Naive thymus-derived CD4-positive, alpha-beta T cell (primary cell): ENCODE measurements at regions of chr1 and their contacts with region 1.

Region 1: GRCh38 chr1:54052934-54053744 is at the starts of genes TCEANC2 and TMEM59:
- DNase-seq: peak; percentile 84 to 99 (median 98)
- ATAC-seq: peak; percentile 94
- H3K4me3 ChIP-seq: peak within 1 kb of the TSS; percentile 94
- H3K4me3 Mint-ChIP-seq: no peak within 1 kb of the TSS
- H3K27ac ChIP-seq: peak within 1 kb of the TSS; percentile 92
- H3K27ac Mint-ChIP-seq: no peak within 1 kb of the TSS
- H3K4me1 ChIP-seq: peaks cover 23 to 34% of the 10 kb centered on the region in 2 donors
- H3K4me1 Mint-ChIP-seq: peaks cover 27 to 62% (median 52%) of the 10 kb centered on the region in 7 donors
- H3K27me3 ChIP-seq: no peaks in the 10 kb centered on the region
- H3K27me3 Mint-ChIP-seq: no peaks in the 10 kb centered on the region
- total RNA-seq, gene TCEANC2: 6.3 to 15.1 (median 12.2) TPM
- total RNA-seq, gene TMEM59: 127 to 197 (median 183) TPM

Region 2: GRCh38 chr1:53220171-53220961 is 832.8 kb before region 1 on chr1 and contains the start of gene CZIB:
- CTCF ChIA-PET with region 1: no interaction called
- POLR2A ChIA-PET with region 1: no interaction called
- intact Hi-C with region 1: loop called in 1 of 2 experiments (anchors 1 kb)
- DNase-seq: peak; percentile 85 to 97 (median 92)
- ATAC-seq: peak; percentile 97
- H3K4me3 ChIP-seq: peak within 1 kb of the TSS; percentile 80
- H3K4me3 Mint-ChIP-seq: peak within 1 kb of the TSS; percentile 83 to 94 (median 92)
- H3K27ac ChIP-seq: peak within 1 kb of the TSS; percentile 99
- H3K27ac Mint-ChIP-seq: peak within 1 kb of the TSS; percentile 91 to 98 (median 96)
- H3K4me1 ChIP-seq: peaks cover 15% of the 10 kb centered on the region in 2 donors
- H3K4me1 Mint-ChIP-seq: peaks cover 15 to 31% (median 26%) of the 10 kb centered on the region in 7 donors
- H3K27me3 ChIP-seq: no peaks in the 10 kb centered on the region
- H3K27me3 Mint-ChIP-seq: no peaks in the 10 kb centered on the region
- total RNA-seq, gene CZIB: 41.9 to 94.9 (median 51.4) TPM

Region 3: DNA sequence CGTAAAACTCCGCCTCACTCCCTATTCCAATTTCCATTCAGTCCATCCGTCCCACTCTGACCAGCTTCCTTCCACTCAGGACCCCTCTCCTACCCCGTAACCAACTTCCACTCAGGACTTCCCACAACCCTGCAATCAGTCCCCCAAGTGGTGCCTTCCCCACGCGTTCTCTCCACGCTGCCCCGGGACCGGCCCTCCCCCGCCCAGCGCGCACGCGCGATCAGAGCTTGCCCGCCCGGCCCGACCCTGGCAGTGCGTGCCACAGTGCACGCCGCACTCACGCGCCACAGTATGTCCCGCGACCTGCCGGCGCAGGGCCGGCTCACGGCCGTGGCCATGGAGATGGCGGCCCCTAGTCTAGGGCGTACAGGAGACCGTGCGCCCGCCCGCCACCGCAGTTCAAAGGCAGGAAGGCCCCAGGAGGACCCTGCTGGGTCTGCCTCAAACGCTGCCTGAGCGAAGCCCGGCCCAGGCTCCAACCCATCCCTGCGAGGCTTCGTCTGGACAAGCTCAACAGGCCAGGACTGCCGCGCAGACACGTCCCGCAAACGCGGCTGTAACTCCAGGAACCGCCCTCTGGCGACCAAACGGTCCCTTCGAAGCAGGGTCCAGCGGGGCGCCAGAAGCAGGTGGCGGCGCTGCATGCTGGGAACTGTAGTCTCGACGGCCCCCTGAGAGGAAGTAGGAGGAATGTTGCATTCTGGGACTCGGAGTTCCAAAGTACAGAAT is 215.1 kb before region 1 on chr1 and contains the start of gene NDC1:
- CTCF ChIA-PET with region 1: no interaction called
- POLR2A ChIA-PET with region 1: interaction called, 4 read pairs
- intact Hi-C with region 1: loop called (anchors 1 kb)
- DNase-seq: peak; percentile 84 to 95 (median 92)
- ATAC-seq: peak; percentile 95
- H3K4me3 ChIP-seq: peak within 1 kb of the TSS; percentile 92
- H3K4me3 Mint-ChIP-seq: peak within 1 kb of the TSS; percentile 96 to 100 (median 99)
- H3K27ac ChIP-seq: peak within 1 kb of the TSS; percentile 95
- H3K27ac Mint-ChIP-seq: peak within 1 kb of the TSS; percentile 96 to 99 (median 98)
- H3K4me1 ChIP-seq: no peaks in the 10 kb centered on the region
- H3K4me1 Mint-ChIP-seq: peaks cover 10 to 41% (median 30%) of the 10 kb centered on the region in 7 donors
- H3K27me3 ChIP-seq: no peaks in the 10 kb centered on the region
- H3K27me3 Mint-ChIP-seq: no peaks in the 10 kb centered on the region
- total RNA-seq, gene NDC1: 6.9 to 20.2 (median 13.2) TPM

Region 4: DNA sequence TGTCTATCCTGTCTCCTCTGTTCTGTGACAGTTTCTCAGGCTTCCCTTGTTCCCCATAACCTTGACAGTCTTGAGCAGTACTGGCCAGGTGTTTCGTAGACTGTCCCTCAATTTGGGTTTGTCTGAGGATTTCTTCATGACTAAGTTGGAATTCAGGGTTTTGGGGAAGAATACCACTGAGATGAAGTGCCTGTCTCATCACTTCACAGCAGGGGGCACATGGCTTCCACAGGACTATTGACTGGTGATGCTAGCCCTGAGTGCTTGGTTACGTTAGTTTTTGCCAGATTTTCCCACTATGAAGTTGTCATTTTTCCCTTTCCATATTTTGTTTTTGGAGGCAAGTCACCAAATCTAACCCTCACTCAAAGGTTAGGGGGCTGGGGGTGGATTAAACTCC is 54.0 kb after region 1 on chr1:
- CTCF ChIA-PET with region 1: no interaction called
- POLR2A ChIA-PET with region 1: no interaction called
- intact Hi-C with region 1: no loop called
- DNase-seq: no peak
- ATAC-seq: no peak
- H3K4me3 ChIP-seq: no peak overlapping the region
- H3K4me3 Mint-ChIP-seq: no peak overlapping the region
- H3K27ac ChIP-seq: no peak overlapping the region
- H3K27ac Mint-ChIP-seq: no peak overlapping the region
- H3K4me1 ChIP-seq: no peaks in the 10 kb centered on the region
- H3K4me1 Mint-ChIP-seq: no peaks in the 10 kb centered on the region
- H3K27me3 ChIP-seq: no peaks in the 10 kb centered on the region
- H3K27me3 Mint-ChIP-seq: no peaks in the 10 kb centered on the region

Region 5: DNA sequence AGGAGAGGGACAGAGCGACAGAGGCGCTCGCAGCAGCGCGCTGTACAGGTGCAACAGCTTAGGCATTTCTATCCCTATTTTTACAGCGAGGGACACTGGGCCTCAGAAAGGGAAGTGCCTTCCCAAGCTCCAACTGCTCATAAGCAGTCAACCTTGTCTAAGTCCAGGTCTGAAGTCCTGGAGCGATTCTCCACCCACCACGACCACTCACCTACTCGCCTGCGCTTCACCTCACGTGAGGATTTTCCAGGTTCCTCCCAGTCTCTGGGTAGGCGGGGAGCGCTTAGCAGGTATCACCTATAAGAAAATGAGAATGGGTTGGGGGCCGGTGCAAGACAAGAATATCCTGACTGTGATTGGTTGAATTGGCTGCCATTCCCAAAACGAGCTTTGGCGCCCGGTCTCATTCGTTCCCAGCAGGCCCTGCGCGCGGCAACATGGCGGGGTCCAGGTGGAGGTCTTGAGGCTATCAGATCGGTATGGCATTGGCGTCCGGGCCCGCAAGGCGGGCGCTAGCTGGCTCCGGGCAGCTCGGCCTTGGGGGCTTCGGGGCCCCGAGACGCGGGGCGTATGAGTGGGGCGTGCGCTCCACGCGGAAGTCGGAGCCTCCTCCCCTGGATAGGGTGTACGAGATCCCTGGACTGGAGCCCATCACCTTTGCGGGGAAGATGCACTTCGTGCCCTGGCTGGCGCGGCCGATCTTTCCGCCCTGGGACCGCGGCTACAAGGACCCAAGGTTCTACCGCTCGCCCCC is 146.8 kb after region 1 on chr1 and contains the starts of genes CYB5RL and MRPL37:
- CTCF ChIA-PET with region 1: no interaction called
- POLR2A ChIA-PET with region 1: interaction called, 3 read pairs
- intact Hi-C with region 1: loop called (anchors 1 kb)
- DNase-seq: peak; percentile 65 to 94 (median 91)
- ATAC-seq: peak; percentile 99
- H3K4me3 ChIP-seq: peak within 1 kb of the TSS; percentile 69
- H3K4me3 Mint-ChIP-seq: peak within 1 kb of the TSS; percentile 90 to 96 (median 92)
- H3K27ac ChIP-seq: peak within 1 kb of the TSS; percentile 81
- H3K27ac Mint-ChIP-seq: peak within 1 kb of the TSS; percentile 64 to 93 (median 87)
- H3K4me1 ChIP-seq: peaks cover 9 to 17% of the 10 kb centered on the region in 2 donors
- H3K4me1 Mint-ChIP-seq: peaks cover 27 to 44% (median 40%) of the 10 kb centered on the region in 7 donors
- H3K27me3 ChIP-seq: no peaks in the 10 kb centered on the region
- H3K27me3 Mint-ChIP-seq: no peaks in the 10 kb centered on the region
- total RNA-seq, gene CYB5RL: 5.1 to 13.5 (median 7.1) TPM
- total RNA-seq, gene MRPL37: 25.4 to 86.7 (median 36.4) TPM

Region 6: DNA sequence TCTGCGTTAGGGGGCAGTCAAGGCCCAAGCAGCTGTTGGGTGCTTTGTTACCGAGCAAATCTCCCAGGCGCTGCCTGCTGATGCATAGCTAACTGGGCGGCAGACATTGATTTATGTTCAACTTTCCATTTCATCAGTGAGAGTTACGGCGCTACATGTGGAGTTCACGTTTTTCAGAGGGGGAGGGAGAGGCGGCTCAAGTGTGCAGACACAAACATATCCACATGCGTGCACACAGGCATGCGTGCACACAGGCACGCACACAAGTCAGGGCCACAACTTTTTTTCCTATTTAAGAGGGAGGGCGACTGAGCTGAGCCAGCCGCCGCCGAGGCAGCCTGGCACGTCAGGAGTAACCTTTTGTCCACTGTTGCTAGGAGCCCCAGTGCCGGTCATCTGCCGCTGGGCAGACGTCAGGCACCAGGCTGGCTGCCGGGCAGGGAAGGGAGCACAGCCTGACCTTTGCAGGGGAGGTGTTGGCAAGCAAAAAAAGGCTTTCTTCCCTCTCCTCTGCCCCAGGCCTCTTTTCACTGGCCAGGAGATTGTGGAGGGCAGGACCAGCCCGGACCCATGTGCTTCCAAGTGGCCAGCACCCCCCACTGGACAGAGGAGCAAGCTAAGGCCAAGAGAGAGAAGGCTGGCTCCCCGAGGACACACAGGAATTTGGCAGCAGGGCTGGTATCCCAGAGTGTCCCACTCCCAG is 220.1 kb after region 1 on chr1:
- CTCF ChIA-PET with region 1: no interaction called
- POLR2A ChIA-PET with region 1: no interaction called
- intact Hi-C with region 1: no loop called
- DNase-seq: no peak
- ATAC-seq: no peak
- H3K4me3 ChIP-seq: no peak overlapping the region
- H3K4me3 Mint-ChIP-seq: no peak overlapping the region
- H3K27ac ChIP-seq: no peak overlapping the region
- H3K27ac Mint-ChIP-seq: peak overlapping the region in 4 of 9 donors; percentile 4 to 60 (median 55)
- H3K4me1 ChIP-seq: peaks cover 0 to 27% of the 10 kb centered on the region in 2 donors
- H3K4me1 Mint-ChIP-seq: peaks cover 28 to 77% (median 65%) of the 10 kb centered on the region in 7 donors
- H3K27me3 ChIP-seq: no peaks in the 10 kb centered on the region
- H3K27me3 Mint-ChIP-seq: no peaks in the 10 kb centered on the region

Region 7: GRCh38 chr1:54372978-54373377 is 319.8 kb after region 1 on chr1:
- CTCF ChIA-PET with region 1: no interaction called
- POLR2A ChIA-PET with region 1: no interaction called
- intact Hi-C with region 1: no loop called
- DNase-seq: peak in 1 of 9 donors; percentile 17
- ATAC-seq: peak; percentile 39
- H3K4me3 ChIP-seq: no peak overlapping the region
- H3K4me3 Mint-ChIP-seq: peak overlapping the region in 8 of 10 donors; percentile 33 to 64 (median 54)
- H3K27ac ChIP-seq: no peak overlapping the region
- H3K27ac Mint-ChIP-seq: peak overlapping the region in 8 of 9 donors; percentile 51 to 87 (median 84)
- H3K4me1 ChIP-seq: peaks cover 5 to 45% of the 10 kb centered on the region in 2 donors
- H3K4me1 Mint-ChIP-seq: peaks cover 61 to 95% (median 91%) of the 10 kb centered on the region in 7 donors
- H3K27me3 ChIP-seq: no peaks in the 10 kb centered on the region
- H3K27me3 Mint-ChIP-seq: no peaks in the 10 kb centered on the region

Region 8: DNA sequence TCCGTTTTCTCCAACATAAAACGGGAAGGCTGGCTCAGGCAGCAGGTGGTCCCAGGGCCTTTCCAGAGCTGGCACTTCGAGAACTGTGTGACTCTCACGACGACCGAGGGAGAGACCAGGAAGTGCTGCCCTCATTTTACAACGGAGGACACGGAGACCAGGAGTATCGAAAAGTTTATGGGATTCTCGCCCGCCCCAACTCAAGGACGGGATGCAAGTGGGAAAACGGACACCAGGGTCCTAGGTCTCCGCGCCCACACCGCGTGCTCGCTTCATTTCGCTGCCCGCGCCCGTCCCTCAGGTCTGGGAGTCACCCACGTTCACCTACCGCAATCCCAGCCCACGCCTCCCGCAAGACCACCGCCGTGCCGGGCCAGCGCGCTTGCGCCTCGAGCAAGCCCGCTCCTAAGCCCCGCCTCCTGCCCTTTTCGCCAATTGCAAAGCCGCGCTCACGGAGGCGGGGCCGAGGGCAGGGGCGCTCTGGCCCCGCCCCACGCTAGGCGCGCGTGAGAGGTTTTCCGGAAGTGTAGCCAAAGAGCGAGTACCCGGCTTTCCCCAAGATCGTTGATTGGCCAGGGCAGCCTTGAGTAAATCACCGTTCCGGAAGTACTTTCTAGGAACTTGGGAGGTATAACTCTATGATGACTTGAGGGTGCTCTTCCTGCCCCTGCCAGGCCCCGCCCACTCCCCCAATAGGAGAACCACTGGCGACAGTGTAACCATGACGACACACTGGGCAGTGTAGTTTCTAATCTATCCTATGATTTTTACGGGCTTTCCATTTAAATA is 711.2 kb after region 1 on chr1 and contains the start of gene PARS2:
- CTCF ChIA-PET with region 1: no interaction called
- POLR2A ChIA-PET with region 1: interaction called, 3 read pairs
- intact Hi-C with region 1: loop called (anchors 1 kb)
- DNase-seq: peak; percentile 89 to 98 (median 97)
- ATAC-seq: peak; percentile 96
- H3K4me3 ChIP-seq: peak within 1 kb of the TSS; percentile 95
- H3K4me3 Mint-ChIP-seq: peak within 1 kb of the TSS; percentile 94 to 97 (median 96)
- H3K27ac ChIP-seq: peak within 1 kb of the TSS; percentile 83
- H3K27ac Mint-ChIP-seq: peak within 1 kb of the TSS; percentile 81 to 97 (median 93)
- H3K4me1 ChIP-seq: peaks cover 0 to 9% of the 10 kb centered on the region in 2 donors
- H3K4me1 Mint-ChIP-seq: peaks cover 14 to 26% (median 24%) of the 10 kb centered on the region in 7 donors
- H3K27me3 ChIP-seq: no peaks in the 10 kb centered on the region
- H3K27me3 Mint-ChIP-seq: no peaks in the 10 kb centered on the region
- total RNA-seq, gene PARS2: 0.66 to 7.6 (median 4.7) TPM